ENCODE measurements at regions of chr2 and their contacts with region 1.

Region 1: DNA sequence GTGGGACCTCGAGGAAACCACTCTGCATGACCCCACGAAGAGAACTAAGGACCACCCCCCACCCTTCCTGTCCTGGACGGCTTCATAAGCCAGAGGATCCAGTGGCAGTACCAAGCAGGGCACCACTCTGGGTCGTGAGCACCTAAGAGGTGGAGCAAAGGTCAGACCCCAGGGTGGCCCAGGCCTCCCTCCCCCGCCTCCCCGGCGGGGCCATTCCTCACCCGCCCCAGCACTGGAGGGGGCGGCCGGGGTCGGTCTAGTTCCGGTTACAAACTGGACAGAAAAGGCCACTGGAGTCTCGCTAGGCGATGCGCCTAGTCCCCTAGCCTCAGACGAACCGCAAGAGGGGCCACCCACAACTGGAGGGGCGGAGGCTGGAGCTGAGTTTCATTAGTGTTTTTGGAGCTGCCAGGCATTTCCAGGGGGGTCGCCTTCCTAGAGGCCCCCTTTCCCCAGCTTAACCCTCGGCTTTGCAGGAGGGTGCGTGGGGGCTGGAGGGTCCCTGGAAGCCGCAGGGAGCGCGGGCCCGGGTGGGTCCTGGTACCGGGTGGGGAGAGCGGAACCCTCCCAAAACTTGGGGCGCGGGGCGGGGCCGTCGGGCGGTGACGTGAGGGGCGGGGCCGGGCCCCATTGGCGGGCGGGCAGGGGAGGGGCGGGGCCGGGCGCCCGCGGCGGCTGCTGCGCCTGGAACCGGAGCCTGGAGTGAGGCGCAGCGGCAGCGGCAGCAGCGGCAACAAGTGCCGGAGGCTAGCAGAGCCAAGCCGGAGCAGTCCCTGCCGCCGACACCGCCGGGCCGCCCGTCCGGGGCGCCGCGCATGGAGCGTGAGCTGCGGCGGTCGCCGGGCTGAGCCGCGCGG is at the start of gene B3GNT2:
- DNase-seq: peak; percentile 57
- ATAC-seq: peak; percentile 93
- H3K4me3 ChIP-seq: peak within 1 kb of the TSS; percentile 91
- H3K27ac ChIP-seq: peak within 1 kb of the TSS; percentile 90
- H3K4me1 ChIP-seq: no peaks in the 10 kb centered on the region
- H3K27me3 ChIP-seq: no peaks in the 10 kb centered on the region; the same call in 1 of the 2 replicates
- CTCF ChIP-seq: no peak
- POLR2A ChIP-seq: peak; percentile 59
- RAD21 ChIP-seq: no peak
- total RNA-seq, gene B3GNT2: 11.1 and 12.2 TPM in 2 replicates

Region 2: GRCh38 chr2:61910603-61911002 is 285.0 kb before region 1 on chr2:
- CTCF ChIA-PET with region 1: no interaction called
- POLR2A ChIA-PET with region 1: no interaction called
- dilution Hi-C with region 1: no loop called
- in situ Hi-C with region 1: no loop called
- intact Hi-C with region 1: loop called (anchors 5 kb)
- DNase-seq: no peak
- ATAC-seq: no peak
- H3K4me3 ChIP-seq: no peak overlapping the region
- H3K27ac ChIP-seq: no peak overlapping the region
- H3K4me1 ChIP-seq: no peaks in the 10 kb centered on the region
- H3K27me3 ChIP-seq: no peaks in the 10 kb centered on the region
- CTCF ChIP-seq: 0 out of 2 replicates have a peak, but pooled peaks have one; percentile 25
- POLR2A ChIP-seq: no peak
- RAD21 ChIP-seq: 0 out of 2 replicates have a peak, but pooled peaks have one; percentile 5

Region 3: GRCh38 chr2:62297624-62298010 is 102.0 kb after region 1 on chr2:
- CTCF ChIA-PET with region 1: no interaction called
- POLR2A ChIA-PET with region 1: no interaction called
- dilution Hi-C with region 1: no loop called
- in situ Hi-C with region 1: no loop called
- intact Hi-C with region 1: loop called (anchors 5 kb)
- DNase-seq: no peak
- ATAC-seq: peak; percentile 32; the same call in 1 of the 2 replicates
- H3K4me3 ChIP-seq: no peak overlapping the region
- H3K27ac ChIP-seq: no peak overlapping the region
- H3K4me1 ChIP-seq: 0 out of 2 replicates have a peak, but pooled peaks cover 2% of the 10 kb centered on the region
- H3K27me3 ChIP-seq: peaks cover 9% of the 10 kb centered on the region
- CTCF ChIP-seq: peak; percentile 28; the same call in 1 of the 2 replicates
- POLR2A ChIP-seq: no peak
- RAD21 ChIP-seq: peak; percentile 38; the same call in 1 of the 2 replicates

Region 4: GRCh38 chr2:62339413-62339812 is 143.8 kb after region 1 on chr2:
- CTCF ChIA-PET with region 1: interaction called, 16 read pairs
- POLR2A ChIA-PET with region 1: no interaction called
- dilution Hi-C with region 1: no loop called
- in situ Hi-C with region 1: no loop called
- intact Hi-C with region 1: no loop called
- DNase-seq: no peak
- ATAC-seq: no peak
- H3K4me3 ChIP-seq: no peak overlapping the region
- H3K27ac ChIP-seq: no peak overlapping the region
- H3K4me1 ChIP-seq: no peaks in the 10 kb centered on the region
- H3K27me3 ChIP-seq: 0 out of 2 replicates have a peak, but pooled peaks cover 3% of the 10 kb centered on the region
- CTCF ChIP-seq: no peak
- POLR2A ChIP-seq: no peak
- RAD21 ChIP-seq: no peak

Measured in IMR-90 (cell line).